ENCODE measurements at regions of chr5 and their contacts with region 1.

Region 1: GRCh38 chr5:141465351-141465750 is 10.4 kb upstream of the PCDHGC3 start:
- DNase-seq: no peak
- H3K4me3 Mint-ChIP-seq: no peak overlapping the region
- H3K27ac Mint-ChIP-seq: no peak overlapping the region
- H3K4me1 Mint-ChIP-seq: no peaks in the 10 kb centered on the region
- H3K27me3 Mint-ChIP-seq: no peaks in the 10 kb centered on the region
- CTCF ChIP-seq: no peak

Region 2: GRCh38 chr5:141475625-141476131 is 10.3 kb after region 1 on chr5 and contains the start of gene PCDHGC3:
- CTCF ChIA-PET with region 1: interaction called, 23 read pairs
- POLR2A ChIA-PET with region 1: interaction called, 17 read pairs
- intact Hi-C with region 1: no loop called
- DNase-seq: peak; percentile 98
- H3K4me3 Mint-ChIP-seq: peak within 1 kb of the TSS; percentile 94
- H3K27ac Mint-ChIP-seq: peak within 1 kb of the TSS; percentile 84
- H3K4me1 Mint-ChIP-seq: peaks cover 18% of the 10 kb centered on the region
- H3K27me3 Mint-ChIP-seq: no peaks in the 10 kb centered on the region
- CTCF ChIP-seq: peak; percentile 55
- total RNA-seq, gene PCDHGC3: 17.3 and 31.7 TPM in 2 replicates